Heart right ventricle (tissue), 16 donors: ENCODE measurements at regions of chr12 and their contacts with region 1.

Region 1: DNA sequence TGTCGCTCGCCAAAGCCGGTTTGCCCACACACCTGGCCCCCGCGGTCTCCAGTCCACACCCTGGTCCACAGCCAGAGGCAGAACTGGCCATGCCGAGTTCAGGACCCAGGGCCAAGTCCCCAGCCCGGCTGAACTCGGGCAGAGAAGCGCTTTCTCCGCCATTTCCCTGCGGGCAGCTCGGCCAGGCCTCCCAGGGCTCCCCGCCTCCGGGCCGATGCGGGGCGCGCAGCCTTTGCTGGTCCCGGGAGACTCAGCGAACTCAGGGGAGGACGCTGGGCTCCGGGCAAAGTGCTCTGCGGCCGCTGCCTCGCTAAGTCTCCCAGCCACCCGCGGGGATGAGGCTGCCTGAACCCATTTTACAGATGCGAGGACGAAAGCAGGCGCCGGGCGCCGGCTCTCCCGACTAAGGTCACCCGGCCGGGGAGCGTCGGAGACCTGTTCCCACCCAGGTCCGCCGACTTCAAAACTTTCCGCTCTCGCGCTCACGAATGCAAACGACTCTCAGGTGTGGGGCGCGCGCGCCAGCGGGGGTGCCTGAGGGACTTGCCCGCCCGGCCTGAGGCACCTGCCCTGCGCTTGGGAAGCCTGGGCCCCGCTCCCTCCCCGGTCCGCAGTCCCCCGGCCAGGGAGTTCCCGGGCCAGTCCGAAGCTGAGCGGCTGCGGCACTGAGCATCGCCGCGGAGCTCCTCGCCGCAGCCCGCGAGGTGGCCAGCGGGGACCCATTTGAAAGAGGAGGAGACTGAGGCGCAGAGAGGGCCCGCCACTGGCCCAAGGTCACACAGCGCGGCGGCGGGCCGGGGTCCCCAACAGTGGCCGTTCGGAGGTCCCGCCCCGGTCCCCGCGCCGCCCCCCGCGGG is 627 bp downstream of the TESC start:
- DNase-seq: peak in 1 of 2 donors; percentile 32
- ATAC-seq: peak in 6 of 8 donors; percentile 3 to 58 (median 22)
- H3K4me3 ChIP-seq: peak overlapping the region; percentile 62 to 93 (median 79)
- H3K27ac ChIP-seq: peak overlapping the region in 9 of 10 donors; percentile 57 to 81 (median 75)
- H3K4me1 ChIP-seq: peaks cover 4 to 72% (median 38%) of the 10 kb centered on the region in 9 donors
- H3K27me3 ChIP-seq: peaks cover 0 to 44% (median 18%) of the 10 kb centered on the region in 7 donors
- CTCF ChIP-seq: no peak

Region 2: GRCh38 chr12:116662612-116663144 is 435.9 kb before region 1 on chr12:
- intact Hi-C with region 1: no loop called
- DNase-seq: peak in 1 of 2 donors; percentile 21
- ATAC-seq: no peak
- H3K4me3 ChIP-seq: no peak overlapping the region
- H3K27ac ChIP-seq: peak overlapping the region in 1 of 10 donors; percentile 27
- H3K4me1 ChIP-seq: peaks cover 6 to 47% (median 23%) of the 10 kb centered on the region in 9 donors
- H3K27me3 ChIP-seq: no peaks in the 10 kb centered on the region
- CTCF ChIP-seq: no peak

Region 3: GRCh38 chr12:117032593-117033381 is 65.8 kb before region 1 on chr12:
- intact Hi-C with region 1: loop called in 1 of 10 experiments (anchors 10 kb)
- DNase-seq: no peak
- ATAC-seq: peak; percentile 27 to 70 (median 54)
- H3K4me3 ChIP-seq: no peak overlapping the region
- H3K27ac ChIP-seq: peak overlapping the region in 7 of 10 donors; percentile 38 to 77 (median 56)
- H3K4me1 ChIP-seq: peaks cover 12 to 56% (median 32%) of the 10 kb centered on the region in 9 donors
- H3K27me3 ChIP-seq: peaks cover 0 to 14% (median 0%) of the 10 kb centered on the region in 7 donors
- CTCF ChIP-seq: no peak

Region 4: DNA sequence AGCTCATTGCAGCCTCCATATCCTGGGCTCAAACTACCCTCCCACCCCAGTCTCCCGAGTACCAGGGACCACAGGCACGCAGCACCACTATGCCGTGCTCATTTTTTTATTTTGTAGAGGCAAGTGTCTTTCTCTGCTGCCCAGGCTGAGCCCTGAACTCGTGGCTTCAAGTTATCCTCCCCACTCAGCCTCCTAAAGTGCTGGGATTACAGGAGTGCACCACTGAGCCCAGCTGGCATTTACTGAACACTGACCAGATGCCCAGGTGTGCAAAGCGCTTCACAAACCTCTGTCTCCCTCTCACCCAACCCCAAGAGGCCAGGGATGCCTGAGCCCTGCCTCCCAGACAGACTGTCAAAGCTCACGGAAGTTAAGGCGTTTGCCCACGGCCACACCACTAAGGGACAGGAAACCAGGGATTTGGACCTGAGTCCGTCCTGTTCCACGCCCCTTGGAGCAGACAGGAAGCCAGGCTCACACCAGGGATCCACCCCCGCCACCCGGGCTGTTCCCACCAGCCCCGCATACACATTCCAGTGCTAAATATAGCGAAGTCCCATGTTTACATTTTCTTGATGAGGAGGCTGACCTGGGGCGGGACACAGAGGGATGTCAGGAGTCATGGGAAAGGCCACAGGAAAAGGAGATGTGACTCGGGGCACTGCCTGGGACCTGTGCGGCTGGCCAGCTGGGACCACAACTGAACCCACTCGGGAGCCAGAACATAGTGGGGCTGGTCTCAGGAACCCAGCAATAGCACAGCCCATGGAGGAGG is 50.6 kb before region 1 on chr12:
- intact Hi-C with region 1: loop called in 4 of 10 experiments (anchors 5 to 10 kb)
- DNase-seq: peak; percentile 66 to 78
- ATAC-seq: peak; percentile 21 to 69 (median 48)
- H3K4me3 ChIP-seq: no peak overlapping the region
- H3K27ac ChIP-seq: peak overlapping the region; percentile 48 to 95 (median 90)
- H3K4me1 ChIP-seq: peaks cover 31 to 94% (median 67%) of the 10 kb centered on the region in 9 donors
- H3K27me3 ChIP-seq: no peaks in the 10 kb centered on the region
- CTCF ChIP-seq: no peak

Region 5: DNA sequence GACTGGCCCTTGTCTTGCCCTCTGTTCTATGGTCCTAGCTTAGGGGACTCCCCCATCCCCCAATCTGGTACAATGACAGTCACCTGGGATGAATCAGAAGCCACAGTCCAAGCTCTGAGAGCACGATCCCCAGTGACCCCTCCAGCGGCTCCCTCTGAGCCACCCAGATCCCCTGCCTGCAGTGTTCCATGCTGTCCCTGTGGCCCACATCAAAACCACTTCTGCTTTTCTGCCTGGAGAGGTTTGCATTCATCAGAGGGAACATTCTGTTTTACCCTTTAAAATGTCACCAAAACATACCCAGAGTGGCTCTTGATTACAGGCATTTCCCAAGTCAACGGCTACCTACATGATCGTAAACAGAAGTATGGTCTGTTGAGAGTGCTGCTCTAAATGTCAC is 215.3 kb after region 1 on chr12:
- intact Hi-C with region 1: no loop called
- DNase-seq: no peak
- ATAC-seq: no peak
- H3K4me3 ChIP-seq: no peak overlapping the region
- H3K27ac ChIP-seq: no peak overlapping the region
- H3K4me1 ChIP-seq: no peaks in the 10 kb centered on the region
- H3K27me3 ChIP-seq: no peaks in the 10 kb centered on the region
- CTCF ChIP-seq: no peak

Region 6: DNA sequence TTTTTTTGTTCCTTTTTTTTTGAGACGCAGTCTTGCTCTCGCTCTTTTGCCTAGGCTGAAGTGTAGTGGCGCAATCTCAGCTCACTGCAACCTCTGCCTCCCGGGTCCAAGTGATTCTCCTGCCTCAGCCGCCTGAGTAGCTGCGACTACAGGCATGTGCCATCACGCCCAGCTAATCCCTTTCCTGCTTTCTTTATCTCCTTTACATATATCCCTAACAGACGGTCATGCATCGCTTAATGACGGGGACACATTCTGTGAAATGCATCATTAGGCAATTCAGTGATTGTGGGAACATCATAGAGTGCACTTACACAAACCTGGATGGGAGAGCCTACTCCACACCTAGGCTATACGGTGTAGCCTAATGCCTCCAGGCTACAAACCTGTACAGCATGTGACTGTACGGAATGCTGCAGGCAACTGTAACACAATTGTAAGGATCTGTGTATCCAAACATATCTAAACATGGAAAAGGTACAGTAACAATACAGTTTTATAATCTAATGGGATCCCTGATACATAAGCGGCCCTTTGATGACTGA is 230.0 kb after region 1 on chr12:
- intact Hi-C with region 1: no loop called
- DNase-seq: no peak
- ATAC-seq: no peak
- H3K4me3 ChIP-seq: no peak overlapping the region
- H3K27ac ChIP-seq: no peak overlapping the region
- H3K4me1 ChIP-seq: no peaks in the 10 kb centered on the region
- H3K27me3 ChIP-seq: peaks cover 0 to 88% (median 43%) of the 10 kb centered on the region in 7 donors
- CTCF ChIP-seq: no peak

Region 7: DNA sequence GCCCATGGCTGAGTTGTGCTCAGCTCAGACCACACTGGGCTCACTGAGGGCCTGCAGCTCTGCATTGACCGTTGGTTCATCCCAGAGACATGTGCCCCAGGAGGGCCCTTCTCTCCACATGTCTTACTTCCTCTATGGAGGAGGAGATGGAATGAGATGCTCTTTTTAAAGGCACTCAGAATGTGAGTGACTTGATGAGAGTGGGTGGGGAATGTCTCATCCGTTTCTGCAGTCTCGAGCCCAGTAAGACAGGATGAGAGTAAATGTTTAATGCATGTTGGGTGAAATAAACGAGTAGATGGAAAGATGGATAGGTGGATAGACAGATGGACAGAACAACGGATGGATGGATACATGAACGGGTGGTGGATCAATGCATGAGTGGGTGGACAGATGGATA is 331.7 kb after region 1 on chr12:
- intact Hi-C with region 1: no loop called
- DNase-seq: no peak
- ATAC-seq: no peak
- H3K4me3 ChIP-seq: no peak overlapping the region
- H3K27ac ChIP-seq: no peak overlapping the region
- H3K4me1 ChIP-seq: no peaks in the 10 kb centered on the region
- H3K27me3 ChIP-seq: no peaks in the 10 kb centered on the region
- CTCF ChIP-seq: no peak